MCF 10A (cell line): ENCODE measurements at regions of chr3 and their contacts with region 1.

Region 1: GRCh38 chr3:129702934-129703712 is 96.6 kb upstream of the PLXND1 start:
- DNase-seq: no peak
- H3K4me3 Mint-ChIP-seq: no peak overlapping the region
- H3K27ac Mint-ChIP-seq: peak overlapping the region; percentile 8
- H3K4me1 Mint-ChIP-seq: peaks cover 11% of the 10 kb centered on the region
- H3K27me3 Mint-ChIP-seq: no peaks in the 10 kb centered on the region
- CTCF ChIP-seq: no peak

Region 2: GRCh38 chr3:129593595-129594339 is 109.4 kb before region 1 on chr3:
- CTCF ChIA-PET with region 1: no interaction called
- POLR2A ChIA-PET with region 1: no interaction called
- intact Hi-C with region 1: no loop called
- DNase-seq: no peak
- H3K4me3 Mint-ChIP-seq: no peak overlapping the region
- H3K27ac Mint-ChIP-seq: no peak overlapping the region
- H3K4me1 Mint-ChIP-seq: no peaks in the 10 kb centered on the region
- H3K27me3 Mint-ChIP-seq: no peaks in the 10 kb centered on the region
- CTCF ChIP-seq: no peak

Region 3: GRCh38 chr3:129690406-129690805 is 12.7 kb before region 1 on chr3:
- CTCF ChIA-PET with region 1: no interaction called
- POLR2A ChIA-PET with region 1: interaction called, 10 read pairs
- intact Hi-C with region 1: no loop called
- DNase-seq: peak; percentile 71
- H3K4me3 Mint-ChIP-seq: no peak overlapping the region
- H3K27ac Mint-ChIP-seq: peak overlapping the region; percentile 47
- H3K4me1 Mint-ChIP-seq: peaks cover 40% of the 10 kb centered on the region
- H3K27me3 Mint-ChIP-seq: no peaks in the 10 kb centered on the region
- CTCF ChIP-seq: no peak